ENCODE measurements at regions of chr12 and their contacts with region 1.

Region 1: DNA sequence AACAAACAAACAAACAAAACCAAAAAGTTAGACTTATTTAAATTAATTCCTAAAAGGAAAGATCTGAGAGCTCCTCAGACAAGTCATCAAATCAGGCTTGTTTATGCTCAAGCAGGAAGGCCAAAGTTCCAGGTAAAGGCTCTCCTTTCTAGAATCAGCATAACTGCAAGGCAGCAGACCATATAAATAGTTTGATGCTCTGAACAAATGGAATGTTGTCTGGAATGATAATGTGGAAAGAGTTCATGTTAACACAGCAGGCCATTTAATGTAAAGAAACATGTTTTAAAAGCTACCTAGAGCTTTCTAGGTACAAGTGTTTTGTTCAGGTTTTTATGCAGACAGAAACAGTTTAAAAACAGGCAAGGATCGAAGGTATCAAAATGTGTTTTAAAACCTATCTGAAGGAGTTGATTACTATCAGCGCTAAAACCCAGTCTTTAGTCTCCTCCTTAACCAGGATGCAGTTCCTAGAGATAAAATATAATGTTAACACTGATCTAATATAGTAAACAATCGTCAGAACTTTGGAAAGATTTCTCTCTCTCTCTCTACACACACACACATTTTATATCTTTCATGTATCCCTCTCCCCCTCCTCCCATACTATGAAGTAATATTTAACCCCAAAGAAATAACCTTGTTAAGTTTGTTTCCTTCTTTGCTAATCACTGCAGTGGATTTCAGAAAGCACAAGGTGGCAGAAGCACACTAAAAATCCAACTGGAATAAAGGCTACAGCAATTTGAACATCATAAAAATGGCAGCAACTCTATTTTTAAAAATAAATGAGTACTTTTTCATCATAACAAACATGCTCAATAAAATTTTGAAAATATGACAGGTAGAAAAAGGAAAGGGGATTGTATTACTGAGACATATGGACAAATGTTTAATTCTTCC is 135.5 kb downstream of the PAWR start:
- DNase-seq: peak; percentile 62
- ATAC-seq: no peak
- H3K4me3 ChIP-seq: no peak overlapping the region
- H3K27ac ChIP-seq: peak overlapping the region; percentile 49
- H3K4me1 ChIP-seq: peaks cover 82% of the 10 kb centered on the region
- H3K27me3 ChIP-seq: no peaks in the 10 kb centered on the region
- CTCF ChIP-seq: peak; percentile 67
- EP300 ChIP-seq: no peak
- POLR2A ChIP-seq: no peak
- RAD21 ChIP-seq: peak; percentile 68

Region 2: GRCh38 chr12:78820946-78821345 is 734.3 kb before region 1 on chr12:
- CTCF ChIA-PET with region 1: no interaction called
- POLR2A ChIA-PET with region 1: no interaction called
- in situ Hi-C with region 1: no loop called
- intact Hi-C with region 1: no loop called
- DNase-seq: no peak
- ATAC-seq: no peak
- H3K4me3 ChIP-seq: no peak overlapping the region
- H3K27ac ChIP-seq: no peak overlapping the region
- H3K4me1 ChIP-seq: no peaks in the 10 kb centered on the region
- H3K27me3 ChIP-seq: no peaks in the 10 kb centered on the region; a peak in 1 of 5 replicates
- CTCF ChIP-seq: no peak
- EP300 ChIP-seq: no peak
- POLR2A ChIP-seq: no peak
- RAD21 ChIP-seq: no peak

Region 3: DNA sequence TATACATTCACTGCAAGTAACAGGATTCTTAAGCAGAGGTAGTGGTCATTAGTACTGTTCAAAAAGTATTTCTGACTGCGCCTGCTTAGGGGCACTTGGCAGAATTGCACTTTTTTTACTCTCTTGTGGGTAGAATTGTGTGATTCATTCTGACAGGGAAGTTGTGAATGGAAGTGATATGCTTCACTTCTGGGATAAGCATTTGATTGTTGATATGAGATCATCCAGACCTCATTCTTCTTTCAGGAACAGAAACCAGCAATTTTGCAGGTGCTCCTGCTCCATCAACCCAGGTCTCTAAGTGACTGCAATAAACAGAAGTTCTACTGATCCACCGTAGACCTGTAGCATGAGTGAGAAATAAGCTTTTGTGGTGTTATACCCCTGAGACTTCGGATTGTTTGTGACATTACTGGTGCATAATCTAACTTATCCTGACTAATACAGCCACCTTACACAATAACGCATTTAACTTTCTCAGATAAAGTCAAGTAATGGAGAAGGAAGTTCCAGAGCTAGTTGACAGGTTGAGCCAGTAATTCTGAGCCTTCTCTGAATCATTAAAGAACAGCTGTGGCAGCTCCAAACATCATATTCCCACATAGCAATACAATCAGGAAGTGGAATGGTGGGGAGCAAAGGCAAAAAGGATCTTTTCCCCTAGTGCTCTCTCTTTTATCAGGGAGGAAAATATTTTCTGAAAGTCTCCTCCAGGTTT is 302.8 kb before region 1 on chr12:
- CTCF ChIA-PET with region 1: no interaction called
- POLR2A ChIA-PET with region 1: no interaction called
- in situ Hi-C with region 1: no loop called
- intact Hi-C with region 1: no loop called
- DNase-seq: no peak
- ATAC-seq: no peak
- H3K4me3 ChIP-seq: no peak overlapping the region
- H3K27ac ChIP-seq: no peak overlapping the region
- H3K4me1 ChIP-seq: no peaks in the 10 kb centered on the region
- H3K27me3 ChIP-seq: no peaks in the 10 kb centered on the region
- CTCF ChIP-seq: no peak
- EP300 ChIP-seq: no peak
- POLR2A ChIP-seq: no peak
- RAD21 ChIP-seq: no peak

Region 4: DNA sequence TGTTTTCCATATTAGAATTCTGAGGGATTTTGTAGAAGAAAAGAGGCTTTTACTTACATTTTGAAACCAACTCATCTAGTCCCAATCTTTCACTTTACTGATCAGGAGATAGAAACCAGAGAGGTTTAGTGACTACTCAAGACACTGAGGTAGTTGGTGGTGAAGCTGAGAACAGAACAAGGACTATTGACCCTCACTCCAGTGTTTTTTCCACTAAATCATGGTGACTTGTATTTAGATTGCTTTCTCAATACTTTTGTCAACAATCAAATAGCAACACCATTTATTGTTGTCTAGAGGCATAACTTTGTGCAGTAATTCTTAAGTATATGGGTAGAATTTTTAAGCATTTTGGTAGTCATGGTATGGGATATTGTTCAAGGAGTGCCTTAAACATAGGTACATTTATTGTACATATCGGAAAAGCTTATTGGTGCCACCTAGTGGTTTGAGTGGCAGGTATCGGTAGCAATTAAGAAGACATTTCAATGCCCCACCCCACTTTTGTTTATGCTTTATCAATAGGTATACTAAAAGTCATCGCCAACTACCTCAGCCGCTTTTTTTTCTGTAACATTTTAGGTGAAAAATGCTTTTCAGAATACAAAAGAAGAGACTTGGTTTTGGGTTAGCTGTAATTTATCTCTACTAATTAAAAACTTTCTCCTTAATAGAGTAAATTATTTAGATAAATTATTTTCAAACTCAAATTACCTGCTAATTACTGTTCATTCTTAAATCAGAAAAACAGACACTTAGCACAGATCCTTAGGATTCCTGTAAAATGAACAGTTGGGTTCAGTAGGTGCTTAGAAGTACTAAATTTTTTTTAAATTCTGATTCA is 182.8 kb after region 1 on chr12:
- CTCF ChIA-PET with region 1: interaction called, 21 read pairs
- POLR2A ChIA-PET with region 1: no interaction called
- in situ Hi-C with region 1: loop called (anchors 5 kb)
- intact Hi-C with region 1: loop called (anchors 1 kb)
- DNase-seq: peak; percentile 68
- ATAC-seq: peak; percentile 84
- H3K4me3 ChIP-seq: no peak overlapping the region
- H3K27ac ChIP-seq: no peak overlapping the region
- H3K4me1 ChIP-seq: peaks cover 6% of the 10 kb centered on the region
- H3K27me3 ChIP-seq: no peaks in the 10 kb centered on the region
- CTCF ChIP-seq: peak; percentile 77
- EP300 ChIP-seq: no peak
- POLR2A ChIP-seq: no peak
- RAD21 ChIP-seq: peak; percentile 46; the same call in 1 of the 2 replicates

Region 5: GRCh38 chr12:80186727-80187217 is 631.5 kb after region 1 on chr12:
- CTCF ChIA-PET with region 1: no interaction called
- POLR2A ChIA-PET with region 1: no interaction called
- in situ Hi-C with region 1: no loop called
- intact Hi-C with region 1: loop called (anchors 2 kb)
- DNase-seq: peak; percentile 82
- ATAC-seq: peak; percentile 95
- H3K4me3 ChIP-seq: no peak overlapping the region
- H3K27ac ChIP-seq: no peak overlapping the region
- H3K4me1 ChIP-seq: peaks cover 4% of the 10 kb centered on the region; the same call in 1 of the 2 replicates
- H3K27me3 ChIP-seq: no peaks in the 10 kb centered on the region
- CTCF ChIP-seq: peak; percentile 85
- EP300 ChIP-seq: no peak
- POLR2A ChIP-seq: no peak
- RAD21 ChIP-seq: peak; percentile 61; the same call in 1 of the 2 replicates